ENCODE measurements at regions of chr6 and their contacts with region 1.

Region 1: DNA sequence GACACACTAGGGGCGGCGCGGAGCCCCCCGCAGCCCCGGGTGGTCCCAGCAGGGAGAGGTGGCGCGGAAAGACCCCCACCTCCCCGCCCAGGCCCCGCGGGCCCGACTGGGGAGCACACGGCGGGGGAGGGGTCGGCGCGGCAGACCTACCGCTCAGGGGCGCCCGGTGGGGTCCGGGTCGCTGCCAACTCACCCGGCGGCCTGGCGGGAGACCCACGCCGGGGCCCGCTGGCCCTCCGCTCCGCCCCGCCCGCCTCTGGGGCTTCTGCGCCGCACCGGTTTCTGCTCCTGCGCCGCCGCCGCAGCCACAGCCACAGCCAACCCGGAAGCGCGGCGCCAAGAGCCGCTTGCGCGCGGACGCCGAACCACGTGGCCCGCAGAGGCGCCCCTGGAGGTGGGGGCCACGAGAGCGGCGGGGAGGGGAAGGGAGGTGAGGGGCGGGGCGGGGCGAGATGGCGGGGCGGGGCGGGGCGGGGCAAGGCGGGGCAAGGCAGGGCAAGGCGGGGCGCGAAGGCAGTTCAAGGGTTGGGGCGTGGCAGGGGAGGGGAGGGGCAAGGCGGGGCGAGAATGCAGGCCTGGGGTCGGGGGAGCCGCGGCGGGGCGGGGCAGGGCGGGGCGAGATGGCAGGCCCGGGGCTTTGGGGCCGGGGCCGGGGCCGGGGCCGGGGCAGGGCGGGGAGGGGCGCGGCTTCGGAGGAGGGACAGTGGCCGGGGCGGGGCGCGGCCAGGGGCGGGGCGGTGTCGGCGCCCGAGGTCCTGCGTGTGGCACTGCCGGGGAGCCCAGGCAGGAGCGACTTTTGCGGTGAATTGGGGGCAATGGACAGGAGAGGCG is at the start of gene ZBTB24:
- DNase-seq: peak; percentile 75 to 94 (median 88)
- ATAC-seq: peak; percentile 87 to 91 (median 90)
- H3K4me3 ChIP-seq: peak within 1 kb of the TSS; percentile 70 to 88
- H3K4me3 Mint-ChIP-seq: peak within 1 kb of the TSS; percentile 89 to 98 (median 93)
- H3K27ac ChIP-seq: peak within 1 kb of the TSS; percentile 80
- H3K27ac Mint-ChIP-seq: peak within 1 kb of the TSS; percentile 77 to 84
- H3K4me1 ChIP-seq: peaks cover 39 to 40% of the 10 kb centered on the region in 2 experiments
- H3K4me1 Mint-ChIP-seq: peaks cover 49 to 53% (median 50%) of the 10 kb centered on the region in 3 donors
- H3K27me3 ChIP-seq: no peaks in the 10 kb centered on the region
- H3K27me3 Mint-ChIP-seq: no peaks in the 10 kb centered on the region
- total RNA-seq, gene ZBTB24: 14.1 to 21.2 (median 19.5) TPM

Region 2: GRCh38 chr6:109458774-109459531 is 24.2 kb before region 1 on chr6:
- CTCF ChIA-PET with region 1: interaction called, 4 to 6 read pairs
- POLR2A ChIA-PET with region 1: interaction called, 5 to 10 read pairs
- DNase-seq: peak in 19 of 35 experiments; percentile 15 to 72 (median 27)
- ATAC-seq: peak; percentile 37 to 51 (median 39)
- H3K4me3 ChIP-seq: no peak overlapping the region
- H3K4me3 Mint-ChIP-seq: no peak overlapping the region
- H3K27ac ChIP-seq: peak overlapping the region; percentile 50
- H3K27ac Mint-ChIP-seq: peak overlapping the region; percentile 71 to 82
- H3K4me1 ChIP-seq: peaks cover 21 to 43% of the 10 kb centered on the region in 2 experiments
- H3K4me1 Mint-ChIP-seq: peaks cover 45 to 64% (median 64%) of the 10 kb centered on the region in 3 donors
- H3K27me3 ChIP-seq: no peaks in the 10 kb centered on the region
- H3K27me3 Mint-ChIP-seq: no peaks in the 10 kb centered on the region

Region 3: DNA sequence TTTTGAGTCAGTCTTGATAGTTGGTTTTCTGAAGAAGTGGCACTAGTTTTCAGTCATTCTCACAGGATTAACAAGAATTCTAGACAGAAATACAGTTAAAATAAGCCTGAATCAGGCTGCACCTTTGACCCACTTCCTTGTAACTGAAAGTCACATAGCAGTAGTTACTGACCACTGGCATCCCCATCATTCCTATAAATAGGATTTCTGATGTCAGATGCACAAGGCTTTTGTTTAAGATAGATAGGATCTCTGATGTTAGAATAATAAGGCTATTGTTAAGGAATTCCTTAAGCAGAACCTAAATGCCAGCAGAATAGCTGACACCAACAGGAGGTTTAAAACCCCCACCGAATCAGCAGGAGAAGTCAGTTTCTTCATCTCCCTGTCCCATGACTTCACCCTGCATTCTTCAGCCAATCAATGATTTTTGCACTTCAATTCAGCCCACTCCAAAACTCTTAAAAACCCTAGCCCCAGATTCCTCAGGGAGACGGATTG is 30.5 kb after region 1 on chr6:
- CTCF ChIA-PET with region 1: no interaction called
- POLR2A ChIA-PET with region 1: no interaction called
- DNase-seq: no peak
- ATAC-seq: no peak
- H3K4me3 ChIP-seq: no peak overlapping the region
- H3K4me3 Mint-ChIP-seq: no peak overlapping the region
- H3K27ac ChIP-seq: no peak overlapping the region
- H3K27ac Mint-ChIP-seq: no peak overlapping the region
- H3K4me1 ChIP-seq: peaks cover 6 to 18% of the 10 kb centered on the region in 2 experiments
- H3K4me1 Mint-ChIP-seq: peaks cover 27 to 28% (median 28%) of the 10 kb centered on the region in 3 donors
- H3K27me3 ChIP-seq: no peaks in the 10 kb centered on the region
- H3K27me3 Mint-ChIP-seq: no peaks in the 10 kb centered on the region

Region 4: GRCh38 chr6:109606359-109606758 is 123.2 kb after region 1 on chr6:
- CTCF ChIA-PET with region 1: no interaction called
- POLR2A ChIA-PET with region 1: no interaction called
- DNase-seq: peak in 8 of 35 experiments; percentile 18 to 62 (median 25)
- ATAC-seq: peak; percentile 57 to 99 (median 80)
- H3K4me3 ChIP-seq: no peak overlapping the region
- H3K4me3 Mint-ChIP-seq: no peak overlapping the region
- H3K27ac ChIP-seq: no peak overlapping the region
- H3K27ac Mint-ChIP-seq: peak overlapping the region in 1 of 2 donors; percentile 29
- H3K4me1 ChIP-seq: peaks cover 3 to 37% of the 10 kb centered on the region in 2 experiments
- H3K4me1 Mint-ChIP-seq: peaks cover 10 to 34% (median 14%) of the 10 kb centered on the region in 3 donors
- H3K27me3 ChIP-seq: peaks cover 0 to 3% of the 10 kb centered on the region in 2 experiments
- H3K27me3 Mint-ChIP-seq: no peaks in the 10 kb centered on the region